Left colon (tissue), 2 donors: ENCODE measurements at regions of chr2 and their contacts with region 1.

Region 1: GRCh38 chr2:101823347-101823791 is 125.9 kb downstream of the MAP4K4 start:
- DNase-seq: peak; percentile 51 to 79
- ATAC-seq: peak; percentile 84

Region 2: GRCh38 chr2:101697124-101698013 is 126.0 kb before region 1 on chr2 and contains the start of gene MAP4K4:
- intact Hi-C with region 1: loop called in 1 of 2 experiments (anchors 5 kb)
- DNase-seq: peak; percentile 78 to 80
- ATAC-seq: peak; percentile 85
- total RNA-seq, gene MAP4K4: 24.9 to 37.5 TPM